Breast epithelium (tissue), 4 donors: ENCODE measurements at regions of chr1 and their contacts with region 1.

Region 1: GRCh38 chr1:229447809-229448252 is 13.9 kb upstream of the ACTA1 start:
- DNase-seq: no peak
- H3K4me3 ChIP-seq: no peak overlapping the region
- H3K27ac ChIP-seq: no peak overlapping the region
- H3K4me1 ChIP-seq: no peaks in the 10 kb centered on the region
- H3K27me3 ChIP-seq: no peaks in the 10 kb centered on the region
- CTCF ChIP-seq: no peak
- POLR2A ChIP-seq: no peak

Region 2: GRCh38 chr1:230642263-230642959 is 1194.6 kb after region 1 on chr1 and contains the start of gene COG2:
- intact Hi-C with region 1: loop called (anchors 5 kb)
- DNase-seq: peak; percentile 81 to 92
- H3K4me3 ChIP-seq: peak within 1 kb of the TSS; percentile 73 to 85 (median 75)
- H3K27ac ChIP-seq: peak within 1 kb of the TSS; percentile 78 to 79
- H3K4me1 ChIP-seq: peaks cover 0 to 18% of the 10 kb centered on the region in 2 donors
- H3K27me3 ChIP-seq: peaks cover 0 to 5% of the 10 kb centered on the region in 2 donors
- CTCF ChIP-seq: peak; percentile 93 to 99 (median 94)
- POLR2A ChIP-seq: no peak
- total RNA-seq, gene COG2: 22.9 to 44.3 (median 33.4) TPM